ENCODE measurements at regions of chr9 and their contacts with region 1.

Region 1: GRCh38 chr9:20884985-20885593 is 146.4 kb downstream of the HACD4 start:
- DNase-seq: peak; percentile 69
- H3K4me3 Mint-ChIP-seq: no peak overlapping the region
- H3K27ac Mint-ChIP-seq: no peak overlapping the region
- H3K4me1 Mint-ChIP-seq: no peaks in the 10 kb centered on the region
- H3K27me3 Mint-ChIP-seq: no peaks in the 10 kb centered on the region

Region 2: DNA sequence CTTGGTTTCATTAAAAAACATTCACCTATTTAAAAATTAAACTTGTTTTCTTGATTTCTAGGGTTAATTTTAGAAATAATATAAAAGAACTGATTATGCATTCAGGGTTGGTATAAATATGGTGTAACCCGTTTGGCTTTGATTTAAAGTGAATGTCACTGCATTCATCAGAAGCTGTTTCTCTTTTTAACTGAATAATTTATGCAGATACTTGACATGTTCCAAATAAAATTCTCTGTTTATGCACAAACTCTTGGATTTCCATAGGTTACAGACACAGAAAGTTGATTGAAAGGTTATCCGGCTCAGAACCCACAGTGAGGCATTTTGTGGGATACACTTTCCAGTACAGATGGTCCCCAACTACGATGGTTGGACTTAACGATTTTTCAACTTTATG is 15.0 kb before region 1 on chr9:
- CTCF ChIA-PET with region 1: interaction called, 15 read pairs
- POLR2A ChIA-PET with region 1: interaction called, 4 read pairs
- intact Hi-C with region 1: no loop called
- DNase-seq: no peak
- H3K4me3 Mint-ChIP-seq: no peak overlapping the region
- H3K27ac Mint-ChIP-seq: no peak overlapping the region
- H3K4me1 Mint-ChIP-seq: peaks cover 5% of the 10 kb centered on the region
- H3K27me3 Mint-ChIP-seq: no peaks in the 10 kb centered on the region

Measured in activated CD4-positive, alpha-beta memory T cell treated with anti-CD3 and anti-CD28 coated beads for 36 hours (primary cell).